ENCODE measurements at regions of chr1 and their contacts with region 1.

Region 1: DNA sequence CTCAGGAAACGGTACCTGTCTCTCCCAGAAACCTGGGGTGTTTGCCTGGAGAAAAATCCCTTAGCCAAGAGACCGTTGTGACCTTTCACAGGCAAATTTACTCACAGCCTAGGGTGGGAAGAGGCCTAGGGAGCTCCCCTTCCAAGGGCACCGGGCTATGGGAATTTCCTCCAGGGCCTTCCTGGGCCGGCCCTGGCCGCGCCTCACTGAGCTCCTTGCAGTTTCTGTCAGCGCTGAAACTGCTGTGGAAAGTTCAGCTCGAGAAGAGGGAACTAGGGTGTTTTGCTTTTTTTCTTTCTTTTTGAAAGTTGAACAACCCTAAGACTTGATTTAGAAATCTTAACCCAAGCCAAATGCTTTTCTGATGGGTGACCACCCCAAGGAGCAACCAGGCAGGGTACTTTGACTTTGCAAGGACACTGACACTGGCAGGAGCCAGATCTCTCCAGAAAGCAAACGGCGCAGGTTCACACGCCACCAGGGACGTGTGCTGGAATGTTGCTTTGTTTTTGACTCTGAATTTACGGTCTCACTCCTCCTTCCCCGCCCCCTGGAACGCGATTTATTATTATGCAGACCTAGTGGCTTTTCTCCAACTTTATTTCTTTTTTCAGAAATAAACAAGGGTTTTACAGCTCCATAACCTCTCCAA is 229.6 kb upstream of the JUN start:
- DNase-seq: peak; percentile 30
- CTCF ChIP-seq: no peak

Region 2: GRCh38 chr1:58968360-58968952 is 44.9 kb before region 1 on chr1:
- CTCF ChIA-PET with region 1: interaction called, 7 read pairs
- POLR2A ChIA-PET with region 1: interaction called, 10 read pairs
- DNase-seq: peak; percentile 60
- CTCF ChIP-seq: no peak

Region 3: DNA sequence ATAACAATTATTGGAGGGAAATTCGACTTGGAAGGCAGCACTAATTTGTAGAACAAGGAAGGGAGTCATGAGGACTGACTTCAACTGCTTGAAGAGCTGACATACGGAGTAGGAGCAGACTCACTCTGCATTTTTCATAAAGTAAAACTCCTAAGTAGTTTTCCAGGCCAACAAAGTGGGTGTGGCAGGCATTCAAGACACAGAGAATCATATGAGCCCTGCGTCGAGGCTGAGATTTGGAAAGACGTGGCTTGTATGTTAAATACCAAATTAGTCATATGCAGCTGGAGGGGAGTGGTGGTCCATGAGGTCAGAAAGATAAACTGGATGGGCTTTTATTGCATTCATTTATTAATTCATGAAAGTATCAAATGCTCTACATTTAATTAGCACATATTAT is 26.1 kb after region 1 on chr1:
- CTCF ChIA-PET with region 1: no interaction called
- POLR2A ChIA-PET with region 1: no interaction called
- DNase-seq: no peak
- CTCF ChIP-seq: no peak